A549 (cell line): ENCODE measurements at regions of chr2 and their contacts with region 1.

Region 1: GRCh38 chr2:25131567-25132298 is 36.6 kb downstream of the POMC start:
- DNase-seq: no peak
- ATAC-seq: no peak
- H3K4me3 ChIP-seq: no peak overlapping the region
- H3K27ac ChIP-seq: no peak overlapping the region
- H3K4me1 ChIP-seq: peaks cover 4% of the 10 kb centered on the region; the same call in 2 of the 3 replicates
- CTCF ChIP-seq: no peak
- EP300 ChIP-seq: no peak
- POLR2A ChIP-seq: no peak
- RAD21 ChIP-seq: no peak

Region 2: DNA sequence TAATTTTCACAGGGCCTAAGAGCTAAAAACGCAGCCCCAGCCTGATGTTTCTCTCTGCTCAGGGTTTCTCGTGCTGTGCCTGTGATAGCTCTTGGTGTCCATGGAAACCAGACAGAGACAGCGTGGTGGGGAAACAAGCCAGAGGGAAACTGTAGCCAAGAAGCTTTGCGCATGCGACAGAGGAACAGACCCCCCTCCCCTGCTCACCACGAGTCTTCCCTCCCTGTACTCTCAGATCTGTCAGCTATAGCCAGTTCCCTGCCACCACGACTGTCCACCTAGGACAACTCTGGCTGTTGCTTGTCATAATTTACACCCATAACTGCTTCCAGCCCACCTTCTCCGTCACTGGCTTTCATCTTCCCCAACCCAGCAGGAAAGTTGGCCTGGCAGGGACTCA is 146.8 kb before region 1 on chr2:
- CTCF ChIA-PET with region 1: interaction called, 375 read pairs
- POLR2A ChIA-PET with region 1: no interaction called
- DNase-seq: no peak
- ATAC-seq: no peak; a peak in 1 of 6 replicates
- H3K4me3 ChIP-seq: no peak overlapping the region
- H3K27ac ChIP-seq: no peak overlapping the region
- H3K4me1 ChIP-seq: no peaks in the 10 kb centered on the region
- CTCF ChIP-seq: no peak
- EP300 ChIP-seq: no peak
- POLR2A ChIP-seq: no peak
- RAD21 ChIP-seq: no peak

Region 3: DNA sequence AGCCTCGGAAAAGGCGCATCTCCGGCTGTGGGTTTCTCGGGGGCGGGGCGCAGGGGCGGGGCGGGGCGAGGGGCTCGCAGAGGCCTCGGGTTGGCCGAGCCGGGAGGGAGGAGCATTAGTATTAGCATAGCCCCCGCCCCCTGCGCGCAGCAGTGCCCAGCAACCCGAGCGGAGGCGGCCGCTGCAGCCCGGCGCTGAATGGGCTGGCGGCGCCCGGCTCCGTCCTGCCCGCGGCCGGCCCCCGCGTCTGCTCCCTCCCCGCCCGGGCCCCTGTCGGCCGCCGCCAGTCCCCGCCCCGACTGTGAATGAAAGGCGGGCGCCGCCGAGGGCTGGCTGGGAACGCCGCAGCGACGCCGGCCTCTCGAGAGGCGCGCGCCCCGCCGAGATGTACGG is 89.8 kb before region 1 on chr2 and contains the start of gene EFR3B:
- CTCF ChIA-PET with region 1: interaction called, 14 read pairs
- POLR2A ChIA-PET with region 1: interaction called, 10 read pairs
- DNase-seq: peak; percentile 91 to 94
- ATAC-seq: peak; percentile 88 to 95
- H3K4me3 ChIP-seq: peak within 1 kb of the TSS; percentile 94
- H3K27ac ChIP-seq: peak within 1 kb of the TSS; percentile 90
- H3K4me1 ChIP-seq: peaks cover 28% of the 10 kb centered on the region
- CTCF ChIP-seq: 0 out of 3 replicates have a peak, but pooled peaks have one; percentile 2
- EP300 ChIP-seq: no peak
- POLR2A ChIP-seq: peak; percentile 57
- RAD21 ChIP-seq: no peak
- polyA plus RNA-seq, gene EFR3B: 6.5 and 8.1 TPM in 2 replicates

Region 4: DNA sequence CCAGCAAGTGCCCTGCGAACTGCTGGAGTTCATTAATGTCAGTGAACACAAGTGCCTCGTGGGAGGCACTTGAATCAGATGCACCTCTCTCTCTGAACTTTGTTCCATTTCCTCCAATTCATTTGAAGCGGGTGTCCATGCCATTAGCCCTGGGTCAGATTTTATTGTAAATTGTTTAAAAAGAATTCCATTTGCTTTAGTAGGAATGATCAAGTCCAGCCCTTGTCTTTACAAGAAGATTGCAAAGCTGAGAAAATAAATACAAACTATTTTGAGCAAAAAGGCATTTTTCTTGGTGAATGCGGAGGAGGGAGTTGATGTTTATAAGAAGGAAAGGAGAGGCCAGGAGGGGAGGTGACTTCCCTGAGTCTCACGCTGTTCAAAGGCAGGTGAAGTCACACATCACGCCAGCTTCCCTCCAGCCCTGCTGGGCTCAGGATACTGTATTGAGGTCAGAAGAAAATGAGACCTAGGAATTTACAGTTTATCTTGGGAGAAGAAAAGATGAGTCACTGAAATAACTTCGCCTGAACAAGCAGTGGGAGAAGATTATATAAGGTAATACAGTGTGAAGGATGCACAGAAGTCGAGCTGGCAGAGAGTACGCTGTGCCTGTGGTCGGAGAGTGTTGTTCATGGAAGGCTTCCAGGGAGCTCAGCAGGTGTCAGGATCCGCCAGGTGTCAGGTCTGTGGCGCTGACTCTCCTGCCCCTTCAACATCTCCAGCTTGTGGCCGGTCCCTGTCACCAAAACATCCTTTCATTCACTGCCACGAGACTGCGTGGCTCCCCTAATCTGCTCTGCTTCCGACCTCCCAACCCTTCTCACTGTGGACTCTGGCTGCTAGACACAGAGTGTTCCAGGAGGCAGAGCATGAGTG is 53.3 kb before region 1 on chr2:
- CTCF ChIA-PET with region 1: interaction called, 23 read pairs
- POLR2A ChIA-PET with region 1: no interaction called
- DNase-seq: peak; percentile 88 to 92
- ATAC-seq: peak; percentile 90 to 95
- H3K4me3 ChIP-seq: 0 out of 3 replicates have a peak overlapping the region, but pooled peaks have one; percentile 2
- H3K27ac ChIP-seq: peak overlapping the region; percentile 46 to 69
- H3K4me1 ChIP-seq: peaks cover 27% of the 10 kb centered on the region
- CTCF ChIP-seq: no peak
- EP300 ChIP-seq: 0 out of 5 replicates have a peak, but pooled peaks of 1 of the 2 experiments have one; percentile 15
- POLR2A ChIP-seq: no peak
- RAD21 ChIP-seq: peak in 1 of 2 experiments; percentile 25; a peak in 2 of 5 replicates

Region 5: GRCh38 chr2:25103287-25103871 is 28.4 kb before region 1 on chr2:
- CTCF ChIA-PET with region 1: interaction called, 15 read pairs
- POLR2A ChIA-PET with region 1: interaction called, 5 read pairs
- DNase-seq: peak; percentile 43 to 82
- ATAC-seq: peak; percentile 61
- H3K4me3 ChIP-seq: no peak overlapping the region
- H3K27ac ChIP-seq: peak overlapping the region; percentile 81 to 89
- H3K4me1 ChIP-seq: peaks cover 60% of the 10 kb centered on the region
- CTCF ChIP-seq: no peak
- EP300 ChIP-seq: no peak
- POLR2A ChIP-seq: no peak
- RAD21 ChIP-seq: no peak

Region 6: DNA sequence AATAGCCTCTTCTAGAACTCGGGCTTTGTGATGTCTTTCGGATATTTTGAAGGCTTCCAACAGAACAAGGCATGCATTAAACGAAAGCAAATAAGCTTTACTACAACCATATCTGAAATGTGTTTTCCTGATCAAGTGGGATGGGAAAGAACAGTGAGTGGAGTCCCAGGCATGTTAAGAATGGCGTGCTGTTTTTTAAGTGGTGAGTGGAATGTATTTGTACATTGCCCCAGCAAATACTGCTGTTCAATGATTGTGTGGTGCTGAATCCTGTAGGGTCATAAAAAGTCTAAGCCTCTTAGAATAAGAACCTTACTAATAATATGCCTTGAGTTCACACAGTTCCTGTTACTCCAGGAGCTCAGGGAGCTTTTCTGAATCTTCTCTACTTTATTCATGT is 15.8 kb before region 1 on chr2:
- CTCF ChIA-PET with region 1: interaction called, 55 read pairs
- POLR2A ChIA-PET with region 1: interaction called, 4 read pairs
- DNase-seq: no peak
- ATAC-seq: no peak
- H3K4me3 ChIP-seq: no peak overlapping the region
- H3K27ac ChIP-seq: no peak overlapping the region
- H3K4me1 ChIP-seq: 0 out of 3 replicates have a peak, but pooled peaks cover 4% of the 10 kb centered on the region
- CTCF ChIP-seq: no peak
- EP300 ChIP-seq: no peak
- POLR2A ChIP-seq: no peak
- RAD21 ChIP-seq: no peak

Region 7: GRCh38 chr2:25145803-25146202 is 14.1 kb after region 1 on chr2:
- CTCF ChIA-PET with region 1: interaction called, 61 read pairs
- POLR2A ChIA-PET with region 1: no interaction called
- DNase-seq: no peak
- ATAC-seq: no peak; a peak in 1 of 6 replicates
- H3K4me3 ChIP-seq: no peak overlapping the region
- H3K27ac ChIP-seq: no peak overlapping the region
- H3K4me1 ChIP-seq: no peaks in the 10 kb centered on the region
- CTCF ChIP-seq: no peak
- EP300 ChIP-seq: no peak
- POLR2A ChIP-seq: no peak
- RAD21 ChIP-seq: no peak

Region 8: GRCh38 chr2:25548601-25549000 is 416.9 kb after region 1 on chr2:
- CTCF ChIA-PET with region 1: no interaction called
- POLR2A ChIA-PET with region 1: no interaction called
- DNase-seq: no peak
- ATAC-seq: no peak
- H3K4me3 ChIP-seq: no peak overlapping the region
- H3K27ac ChIP-seq: no peak overlapping the region
- H3K4me1 ChIP-seq: no peaks in the 10 kb centered on the region
- CTCF ChIP-seq: no peak
- EP300 ChIP-seq: no peak
- POLR2A ChIP-seq: no peak
- RAD21 ChIP-seq: no peak